Heart left ventricle (tissue), 16 donors: ENCODE measurements at regions of chr3 and their contacts with region 1.

Region 1: DNA sequence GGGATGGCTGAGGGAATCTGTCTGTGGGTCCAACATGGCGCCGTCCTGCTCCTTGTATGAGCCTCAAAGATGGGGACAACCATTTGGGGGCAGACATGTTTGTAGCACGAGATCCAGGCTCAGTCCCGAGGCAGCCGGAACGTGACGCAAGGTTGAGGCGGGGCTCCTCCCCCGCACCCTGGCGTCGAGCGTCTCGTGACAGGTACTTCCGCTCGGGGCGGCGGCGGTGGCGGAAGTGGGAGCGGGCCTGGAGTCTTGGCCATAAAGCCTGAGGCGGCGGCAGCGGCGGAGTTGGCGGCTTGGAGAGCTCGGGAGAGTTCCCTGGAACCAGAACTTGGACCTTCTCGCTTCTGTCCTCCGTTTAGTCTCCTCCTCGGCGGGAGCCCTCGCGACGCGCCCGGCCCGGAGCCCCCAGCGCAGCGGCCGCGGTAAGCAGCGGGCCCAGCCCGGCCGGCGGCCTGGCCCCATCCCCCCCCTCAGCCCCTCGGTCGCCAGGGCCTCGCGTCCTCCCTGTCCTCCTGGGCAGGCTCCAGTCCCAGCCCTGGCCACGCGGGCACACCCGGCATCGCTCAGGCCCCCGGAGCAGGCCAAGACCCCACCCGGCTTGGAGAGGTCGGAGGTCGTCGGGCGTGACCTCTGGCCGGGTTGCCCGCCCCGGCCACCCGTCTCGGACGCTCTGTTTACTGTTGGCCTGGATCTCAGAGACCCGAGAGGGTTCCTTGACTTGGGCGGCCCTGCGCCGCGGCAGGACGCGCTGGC is at the start of gene RAB7A:
- DNase-seq: peak; percentile 98 to 99 (median 98)
- ATAC-seq: peak; percentile 98 to 99 (median 98)
- H3K4me3 ChIP-seq: peak within 1 kb of the TSS; percentile 57 to 99 (median 92)
- H3K27ac ChIP-seq: peak within 1 kb of the TSS; percentile 89 to 98 (median 94)
- H3K4me1 ChIP-seq: peaks cover 23 to 49% (median 40%) of the 10 kb centered on the region in 12 donors
- H3K27me3 ChIP-seq: no peaks in the 10 kb centered on the region
- CTCF ChIP-seq: peak in 3 of 12 donors; percentile 17 to 39 (median 21)
- POLR2A ChIP-seq: peak in 1 of 2 donors; percentile 89
- total RNA-seq, gene RAB7A: 143 to 343 (median 257) TPM

Region 2: GRCh38 chr3:128680602-128681368 is 45.3 kb before region 1 on chr3:
- intact Hi-C with region 1: loop called in 7 of 10 experiments (anchors 1 to 10 kb)
- DNase-seq: peak; percentile 99 to 100 (median 100)
- ATAC-seq: peak; percentile 100
- H3K4me3 ChIP-seq: peak overlapping the region; percentile 45 to 82 (median 70)
- H3K27ac ChIP-seq: peak overlapping the region; percentile 92 to 98 (median 96)
- H3K4me1 ChIP-seq: peaks cover 0 to 24% (median 7%) of the 10 kb centered on the region in 12 donors
- H3K27me3 ChIP-seq: no peaks in the 10 kb centered on the region
- CTCF ChIP-seq: peak; percentile 94 to 99 (median 96)
- POLR2A ChIP-seq: peak in 1 of 2 donors; percentile 68

Region 3: GRCh38 chr3:128787256-128788240 is 61.4 kb after region 1 on chr3:
- intact Hi-C with region 1: loop called in 8 of 10 experiments (anchors 1 to 10 kb)
- DNase-seq: no peak
- ATAC-seq: no peak
- H3K4me3 ChIP-seq: no peak overlapping the region
- H3K27ac ChIP-seq: peak overlapping the region in 6 of 12 donors; percentile 1 to 80 (median 52)
- H3K4me1 ChIP-seq: peaks cover 4 to 97% (median 75%) of the 10 kb centered on the region in 12 donors
- H3K27me3 ChIP-seq: no peaks in the 10 kb centered on the region
- CTCF ChIP-seq: peak in 6 of 12 donors; percentile 7 to 27 (median 14)
- POLR2A ChIP-seq: no peak

Region 4: GRCh38 chr3:128794770-128795649 is 68.9 kb after region 1 on chr3:
- intact Hi-C with region 1: loop called in 4 of 10 experiments (anchors 1 to 5 kb)
- DNase-seq: peak in 3 of 5 donors; percentile 59 to 61 (median 59)
- ATAC-seq: peak; percentile 78 to 94 (median 92)
- H3K4me3 ChIP-seq: no peak overlapping the region
- H3K27ac ChIP-seq: peak overlapping the region in 8 of 12 donors; percentile 44 to 71 (median 56)
- H3K4me1 ChIP-seq: peaks cover 0 to 69% (median 38%) of the 10 kb centered on the region in 12 donors
- H3K27me3 ChIP-seq: no peaks in the 10 kb centered on the region
- CTCF ChIP-seq: peak; percentile 71 to 88 (median 80)
- POLR2A ChIP-seq: no peak

Region 5: GRCh38 chr3:128804017-128804810 is 78.1 kb after region 1 on chr3:
- intact Hi-C with region 1: loop called in 2 of 10 experiments (anchors 5 kb)
- DNase-seq: no peak
- ATAC-seq: peak in 2 of 4 donors; percentile 26 to 57
- H3K4me3 ChIP-seq: peak overlapping the region in 9 of 12 donors; percentile 2 to 49 (median 32)
- H3K27ac ChIP-seq: peak overlapping the region; percentile 53 to 91 (median 86)
- H3K4me1 ChIP-seq: peaks cover 0 to 94% (median 72%) of the 10 kb centered on the region in 12 donors
- H3K27me3 ChIP-seq: no peaks in the 10 kb centered on the region
- CTCF ChIP-seq: no peak
- POLR2A ChIP-seq: no peak